A673 (cell line): ENCODE measurements at regions of chr2 and their contacts with region 1.

Region 1: DNA sequence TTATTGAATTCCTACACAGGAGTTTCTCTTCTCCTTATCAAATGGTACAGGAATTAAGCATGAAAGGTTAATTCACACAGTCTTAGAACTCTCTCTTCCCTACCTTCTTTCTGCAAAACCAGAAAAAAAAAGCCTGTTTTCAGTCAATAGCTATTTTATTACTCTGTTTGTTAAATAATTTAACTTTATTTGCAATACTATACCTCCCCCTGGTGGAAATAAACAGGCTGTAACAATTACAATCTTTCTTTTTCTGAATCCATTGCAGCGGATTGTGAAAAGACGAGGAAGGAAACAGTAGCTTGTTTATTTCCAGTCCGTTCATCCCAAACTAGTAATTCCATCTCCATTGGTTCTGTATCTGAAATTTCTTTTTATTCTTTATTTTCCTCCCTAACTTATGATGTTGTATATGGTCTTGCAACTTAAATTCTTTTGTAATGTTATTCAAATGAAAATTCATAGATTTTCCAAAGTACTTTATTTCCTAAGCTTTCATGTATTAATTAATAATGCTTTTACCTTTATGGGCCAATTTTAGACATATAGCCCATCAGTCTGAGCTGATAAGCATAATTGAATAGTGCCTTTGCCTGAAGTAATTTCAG is 165.2 kb downstream of the SH3BP4 start:
- DNase-seq: peak; percentile 79
- H3K4me3 ChIP-seq: no peak overlapping the region
- H3K27ac ChIP-seq: no peak overlapping the region
- H3K4me1 ChIP-seq: no peaks in the 10 kb centered on the region
- H3K27me3 ChIP-seq: no peaks in the 10 kb centered on the region
- CTCF ChIP-seq: peak; percentile 74

Region 2: DNA sequence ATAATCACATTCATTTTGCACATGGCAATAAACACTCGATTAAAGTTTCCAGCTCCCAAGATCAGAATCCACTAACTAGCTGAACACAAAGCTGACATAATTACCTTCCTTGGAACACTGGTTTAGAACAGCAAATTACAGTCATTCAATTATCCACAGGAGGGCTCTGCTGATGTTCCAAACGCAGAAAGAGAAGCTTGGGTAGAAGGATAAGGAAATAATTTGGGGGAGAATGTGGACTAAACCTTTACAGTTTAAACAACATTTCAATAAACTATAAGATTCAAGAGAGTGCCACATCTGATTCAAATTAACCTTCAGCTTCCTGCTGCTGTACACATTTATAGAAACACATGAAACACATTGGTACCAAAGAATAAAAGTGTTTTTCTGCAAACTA is 552.3 kb before region 1 on chr2:
- CTCF ChIA-PET with region 1: interaction called, 10 read pairs
- POLR2A ChIA-PET with region 1: no interaction called
- intact Hi-C with region 1: no loop called
- DNase-seq: peak; percentile 83
- H3K4me3 ChIP-seq: no peak overlapping the region
- H3K27ac ChIP-seq: no peak overlapping the region
- H3K4me1 ChIP-seq: peaks cover 6% of the 10 kb centered on the region
- H3K27me3 ChIP-seq: no peaks in the 10 kb centered on the region
- CTCF ChIP-seq: peak; percentile 57

Region 3: GRCh38 chr2:235543104-235543762 is 426.2 kb after region 1 on chr2:
- CTCF ChIA-PET with region 1: no interaction called
- POLR2A ChIA-PET with region 1: no interaction called
- intact Hi-C with region 1: no loop called
- DNase-seq: no peak
- H3K4me3 ChIP-seq: no peak overlapping the region
- H3K27ac ChIP-seq: no peak overlapping the region
- H3K4me1 ChIP-seq: peaks cover 11% of the 10 kb centered on the region
- H3K27me3 ChIP-seq: no peaks in the 10 kb centered on the region
- CTCF ChIP-seq: no peak